Gastrocnemius medialis (tissue), 4 donors: ENCODE measurements at regions of chr20 and their contacts with region 1.

Region 1: GRCh38 chr20:44388466-44389023 is 33.0 kb downstream of the HNF4A start:
- DNase-seq: peak; percentile 22 to 62
- ATAC-seq: peak; percentile 54 to 73
- H3K4me3 ChIP-seq: no peak overlapping the region
- H3K27ac ChIP-seq: no peak overlapping the region
- H3K4me1 ChIP-seq: no peaks in the 10 kb centered on the region
- H3K27me3 ChIP-seq: peaks cover 2 to 19% (median 12%) of the 10 kb centered on the region in 3 donors
- CTCF ChIP-seq: peak; percentile 58 to 74 (median 63)
- POLR2A ChIP-seq: no peak

Region 2: GRCh38 chr20:44217342-44218092 is 171.0 kb before region 1 on chr20:
- in situ Hi-C with region 1: loop called in 1 of 4 experiments (anchors 5 kb)
- intact Hi-C with region 1: loop called (anchors 5 kb)
- DNase-seq: peak; percentile 57 to 68
- ATAC-seq: peak; percentile 84 to 90
- H3K4me3 ChIP-seq: no peak overlapping the region
- H3K27ac ChIP-seq: no peak overlapping the region
- H3K4me1 ChIP-seq: peaks cover 8 to 13% of the 10 kb centered on the region in 2 donors
- H3K27me3 ChIP-seq: no peaks in the 10 kb centered on the region
- CTCF ChIP-seq: peak; percentile 78 to 96 (median 88)
- POLR2A ChIP-seq: no peak

Region 3: GRCh38 chr20:44467289-44467883 is 78.8 kb after region 1 on chr20:
- in situ Hi-C with region 1: loop called in 3 of 4 experiments (anchors 5 to 10 kb)
- intact Hi-C with region 1: loop called (anchors 5 kb)
- DNase-seq: peak; percentile 77 to 91
- ATAC-seq: peak; percentile 86 to 88
- H3K4me3 ChIP-seq: no peak overlapping the region
- H3K27ac ChIP-seq: peak overlapping the region; percentile 60 to 88 (median 76)
- H3K4me1 ChIP-seq: peaks cover 0 to 13% of the 10 kb centered on the region in 2 donors
- H3K27me3 ChIP-seq: no peaks in the 10 kb centered on the region
- CTCF ChIP-seq: no peak
- POLR2A ChIP-seq: no peak

Region 4: DNA sequence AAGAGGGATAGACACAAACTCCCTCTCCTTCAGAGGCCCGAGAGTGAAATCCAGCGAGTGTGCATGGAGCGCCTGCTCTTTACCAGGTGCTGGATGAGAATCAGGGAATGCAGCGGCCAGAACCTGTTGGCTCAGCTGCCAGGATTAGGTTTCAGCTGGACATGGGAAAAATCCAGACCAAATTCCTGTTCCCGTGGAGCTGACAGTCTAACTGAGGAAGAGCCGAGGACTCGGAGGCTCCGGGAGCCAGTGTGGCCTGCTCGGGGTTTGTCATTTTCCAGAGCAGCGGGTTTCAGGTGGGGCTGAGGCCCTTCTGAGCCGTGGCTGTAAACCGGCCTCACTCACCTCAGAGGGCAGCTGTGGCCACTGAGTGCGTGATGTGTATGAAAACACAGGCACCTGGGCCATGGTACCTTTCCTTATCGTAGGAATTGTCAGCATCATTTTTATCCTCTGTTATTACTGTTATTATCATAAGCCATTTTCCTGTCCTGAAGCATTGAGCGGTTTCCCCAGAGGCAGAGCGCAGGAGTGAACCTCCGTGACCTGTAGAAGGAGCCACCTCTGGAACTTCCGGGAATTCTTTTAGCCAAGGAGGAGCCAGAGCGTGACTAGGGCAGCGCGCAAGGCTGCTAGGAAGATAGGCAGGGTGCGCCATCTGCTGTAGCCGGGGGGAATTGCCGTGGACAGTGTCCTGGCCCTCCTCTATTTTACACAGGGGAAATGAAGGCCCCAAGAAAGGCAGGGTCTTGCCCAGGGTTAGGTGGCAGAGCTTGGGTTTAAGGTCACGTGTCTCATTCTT is 221.2 kb after region 1 on chr20:
- in situ Hi-C with region 1: loop called in 3 of 4 experiments (anchors 10 to 25 kb)
- intact Hi-C with region 1: loop called (anchors 2 kb)
- DNase-seq: peak; percentile 81 to 88
- ATAC-seq: peak; percentile 94
- H3K4me3 ChIP-seq: peak overlapping the region; percentile 35 to 44 (median 41)
- H3K27ac ChIP-seq: peak overlapping the region; percentile 88 to 93 (median 92)
- H3K4me1 ChIP-seq: peaks cover 35 to 43% of the 10 kb centered on the region in 2 donors
- H3K27me3 ChIP-seq: no peaks in the 10 kb centered on the region
- CTCF ChIP-seq: peak; percentile 96 to 99 (median 98)
- POLR2A ChIP-seq: no peak

Region 5: DNA sequence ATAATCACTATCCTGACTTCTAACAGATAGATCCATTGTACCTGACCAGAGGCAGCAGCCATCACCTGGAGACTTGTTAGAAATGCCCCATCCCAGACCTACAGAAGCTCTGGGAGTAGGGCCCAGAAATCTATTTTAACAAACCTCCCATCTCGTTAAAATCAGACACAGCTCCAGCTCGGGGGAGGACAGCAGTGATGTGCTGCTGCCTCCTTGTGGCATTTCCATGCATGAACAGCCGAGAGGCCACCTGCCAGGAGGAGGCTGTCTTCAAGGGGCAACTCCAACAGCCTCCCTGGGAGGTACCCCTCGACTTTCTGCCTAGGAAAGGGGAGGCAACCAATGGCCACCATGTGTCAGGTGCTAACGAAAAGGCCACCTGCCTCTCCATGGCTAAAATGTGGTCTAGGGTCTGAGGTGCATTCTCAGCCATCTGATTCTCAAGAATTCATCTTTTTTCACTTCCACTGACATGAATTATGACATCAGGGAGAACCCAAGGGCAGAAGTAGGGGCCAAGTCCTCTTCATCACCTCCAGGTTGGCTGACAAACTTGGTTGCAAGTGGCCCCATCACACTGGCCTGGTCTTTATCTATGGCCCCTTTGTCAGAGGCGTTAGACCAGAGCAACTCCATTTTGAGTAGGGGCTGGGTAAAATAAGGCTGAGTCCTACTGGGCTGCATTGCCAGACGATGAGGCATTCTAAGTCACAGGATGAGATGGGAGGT is 345.0 kb after region 1 on chr20:
- in situ Hi-C with region 1: loop called in 1 of 4 experiments (anchors 10 kb)
- intact Hi-C with region 1: loop called (anchors 5 kb)
- DNase-seq: peak; percentile 53 to 70
- ATAC-seq: peak; percentile 37 to 45
- H3K4me3 ChIP-seq: no peak overlapping the region
- H3K27ac ChIP-seq: no peak overlapping the region
- H3K4me1 ChIP-seq: peaks cover 30 to 36% of the 10 kb centered on the region in 2 donors
- H3K27me3 ChIP-seq: no peaks in the 10 kb centered on the region
- CTCF ChIP-seq: peak; percentile 94 to 98 (median 96)
- POLR2A ChIP-seq: no peak